Esophagus muscularis mucosa (tissue), 4 donors: ENCODE measurements at regions of chr2 and their contacts with region 1.

Region 1: GRCh38 chr2:240143801-240144648 is 3.6 kb upstream of the OTOS start:
- DNase-seq: no peak
- H3K4me3 ChIP-seq: no peak overlapping the region
- H3K27ac ChIP-seq: no peak overlapping the region
- H3K4me1 ChIP-seq: peaks cover 0 to 8% (median 8%) of the 10 kb centered on the region in 4 donors
- H3K27me3 ChIP-seq: peaks cover 0 to 57% (median under 1%) of the 10 kb centered on the region in 4 donors
- CTCF ChIP-seq: peak; percentile 91 to 98 (median 93)
- EP300 ChIP-seq: no peak
- POLR2A ChIP-seq: no peak

Region 2: DNA sequence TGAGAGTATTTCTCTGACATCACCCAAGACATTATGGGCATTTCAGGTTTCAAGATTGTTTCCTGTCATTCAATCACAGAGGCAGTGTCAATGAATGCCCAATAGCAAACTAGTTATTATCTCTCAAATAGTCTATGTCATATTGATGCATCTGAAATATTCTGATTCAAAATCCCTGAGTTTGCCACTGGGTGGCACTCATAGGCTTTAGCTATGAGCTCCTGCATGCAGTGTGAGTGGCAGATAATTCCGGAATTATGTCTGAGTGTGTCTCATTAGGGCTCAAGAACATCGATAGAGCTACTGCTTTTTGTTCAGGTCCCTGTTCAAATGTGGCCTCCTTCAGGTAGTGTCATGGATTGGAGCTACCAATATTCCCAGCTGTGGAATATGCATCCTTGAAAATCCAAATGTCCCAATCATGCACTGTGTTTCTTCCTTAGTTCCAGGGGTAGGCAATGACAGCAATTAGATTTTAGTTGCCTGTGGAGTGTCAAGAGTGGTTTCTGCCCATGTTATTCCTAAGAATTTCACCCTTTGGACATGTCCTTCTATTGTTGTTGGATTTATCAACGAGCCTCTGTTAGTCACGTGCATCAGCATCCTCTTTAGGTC is 82.9 kb before region 1 on chr2:
- intact Hi-C with region 1: loop called (anchors 1 kb)
- DNase-seq: no peak
- H3K4me3 ChIP-seq: no peak overlapping the region
- H3K27ac ChIP-seq: no peak overlapping the region
- H3K4me1 ChIP-seq: no peaks in the 10 kb centered on the region
- H3K27me3 ChIP-seq: peaks cover 0 to 29% (median 2%) of the 10 kb centered on the region in 4 donors
- CTCF ChIP-seq: peak; percentile 48 to 65 (median 60)
- EP300 ChIP-seq: no peak
- POLR2A ChIP-seq: no peak

Region 3: DNA sequence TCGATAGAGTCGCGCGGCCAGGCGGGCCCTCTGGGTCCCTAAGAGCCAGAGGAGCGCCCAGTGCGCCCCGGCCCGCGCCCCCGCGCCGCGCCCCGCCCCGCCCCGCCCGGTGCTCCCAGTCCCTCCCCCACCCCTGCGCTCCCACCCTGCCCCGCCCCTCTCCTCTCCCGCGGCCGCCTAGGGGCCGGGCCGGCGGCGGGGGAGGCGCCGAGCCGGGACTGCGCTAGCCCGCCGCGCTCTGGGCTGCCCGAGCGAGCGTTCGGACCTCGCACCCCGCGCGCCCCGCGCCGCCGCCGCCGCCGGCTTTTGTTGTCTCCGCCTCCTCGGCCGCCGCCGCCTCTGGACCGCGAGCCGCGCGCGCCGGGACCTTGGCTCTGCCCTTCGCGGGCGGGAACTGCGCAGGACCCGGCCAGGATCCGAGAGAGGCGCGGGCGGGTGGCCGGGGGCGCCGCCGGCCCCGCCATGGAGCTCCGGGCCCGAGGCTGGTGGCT is 291.5 kb after region 1 on chr2 and contains the start of gene GPC1:
- intact Hi-C with region 1: no loop called
- DNase-seq: no peak
- H3K4me3 ChIP-seq: peak within 1 kb of the TSS; percentile 65 to 84 (median 77)
- H3K27ac ChIP-seq: peak within 1 kb of the TSS; percentile 94 to 96 (median 95)
- H3K4me1 ChIP-seq: peaks cover 36 to 53% (median 48%) of the 10 kb centered on the region in 4 donors
- H3K27me3 ChIP-seq: peaks cover 0 to 19% (median 0%) of the 10 kb centered on the region in 4 donors
- CTCF ChIP-seq: peak in 1 of 3 experiments; percentile 18
- EP300 ChIP-seq: no peak
- POLR2A ChIP-seq: no peak
- total RNA-seq, gene GPC1: 29.1 to 71.5 (median 41.8) TPM